ENCODE measurements at regions of chr19 and their contacts with region 1.

Region 1: GRCh38 chr19:38683393-38684080 is 36.1 kb downstream of the ACTN4 start:
- DNase-seq: peak; percentile 83 to 85
- H3K4me3 ChIP-seq: peak overlapping the region in 1 of 4 experiments; percentile 32; a peak in 1 of 8 replicates
- H3K27ac ChIP-seq: peak overlapping the region; percentile 95
- H3K4me1 ChIP-seq: peaks cover 28 to 46% (median 41%) of the 10 kb centered on the region in 4 experiments
- H3K27me3 ChIP-seq: no peaks in the 10 kb centered on the region
- CTCF ChIP-seq: no peak
- EP300 ChIP-seq: peak in 1 of 2 experiments; percentile 84; a peak in 1 of 3 replicates
- POLR2A ChIP-seq: peak in 1 of 2 experiments; percentile 32; a peak in 1 of 3 replicates
- RAD21 ChIP-seq: no peak

Region 2: GRCh38 chr19:38583219-38583984 is 100.1 kb before region 1 on chr19:
- CTCF ChIA-PET with region 1: no interaction called
- POLR2A ChIA-PET with region 1: no interaction called
- DNase-seq: no peak
- H3K4me3 ChIP-seq: no peak overlapping the region
- H3K27ac ChIP-seq: no peak overlapping the region
- H3K4me1 ChIP-seq: no peaks in the 10 kb centered on the region
- H3K27me3 ChIP-seq: no peaks in the 10 kb centered on the region
- CTCF ChIP-seq: no peak
- EP300 ChIP-seq: no peak
- POLR2A ChIP-seq: no peak
- RAD21 ChIP-seq: no peak

Region 3: DNA sequence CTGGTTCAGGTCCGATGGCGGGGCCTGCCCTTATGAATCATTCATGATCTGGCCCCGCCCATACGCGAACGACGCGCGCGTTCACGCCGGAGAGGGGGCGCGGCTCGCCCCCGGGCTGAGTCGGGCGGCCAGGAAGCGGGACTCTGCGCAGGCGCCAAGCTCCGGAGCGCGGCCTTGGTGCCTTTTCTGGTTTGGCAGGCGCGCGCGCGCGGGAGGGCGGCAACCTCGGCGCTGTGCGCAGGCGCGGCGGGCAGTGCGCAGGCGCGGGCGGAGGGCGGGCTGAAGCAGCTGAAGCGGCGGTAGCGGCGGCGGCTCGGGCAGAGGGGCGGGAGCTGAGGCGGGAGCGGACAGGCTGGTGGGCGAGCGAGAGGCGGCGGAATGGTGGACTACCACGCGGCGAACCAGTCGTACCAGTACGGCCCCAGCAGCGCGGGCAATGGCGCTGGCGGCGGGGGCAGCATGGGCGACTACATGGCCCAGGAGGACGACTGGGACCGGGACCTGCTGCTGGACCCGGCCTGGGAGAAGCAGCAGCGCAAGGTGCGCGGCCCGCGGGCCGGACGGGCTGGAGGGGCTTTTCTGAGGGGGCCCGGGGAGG is 36.1 kb before region 1 on chr19 and contains the start of gene ACTN4:
- CTCF ChIA-PET with region 1: interaction called, 3 read pairs
- POLR2A ChIA-PET with region 1: interaction called, 495 read pairs
- DNase-seq: peak; percentile 93 to 100
- H3K4me3 ChIP-seq: peak within 1 kb of the TSS; percentile 91 to 98 (median 95)
- H3K27ac ChIP-seq: peak within 1 kb of the TSS; percentile 71; the same call in 1 of the 2 replicates
- H3K4me1 ChIP-seq: peaks cover 5 to 19% (median 12%) of the 10 kb centered on the region in 4 experiments
- H3K27me3 ChIP-seq: no peaks in the 10 kb centered on the region
- CTCF ChIP-seq: no peak
- EP300 ChIP-seq: no peak
- POLR2A ChIP-seq: peak; percentile 92 to 93
- RAD21 ChIP-seq: no peak
- total RNA-seq, gene ACTN4: 520 and 530 TPM in 2 replicates

Region 4: DNA sequence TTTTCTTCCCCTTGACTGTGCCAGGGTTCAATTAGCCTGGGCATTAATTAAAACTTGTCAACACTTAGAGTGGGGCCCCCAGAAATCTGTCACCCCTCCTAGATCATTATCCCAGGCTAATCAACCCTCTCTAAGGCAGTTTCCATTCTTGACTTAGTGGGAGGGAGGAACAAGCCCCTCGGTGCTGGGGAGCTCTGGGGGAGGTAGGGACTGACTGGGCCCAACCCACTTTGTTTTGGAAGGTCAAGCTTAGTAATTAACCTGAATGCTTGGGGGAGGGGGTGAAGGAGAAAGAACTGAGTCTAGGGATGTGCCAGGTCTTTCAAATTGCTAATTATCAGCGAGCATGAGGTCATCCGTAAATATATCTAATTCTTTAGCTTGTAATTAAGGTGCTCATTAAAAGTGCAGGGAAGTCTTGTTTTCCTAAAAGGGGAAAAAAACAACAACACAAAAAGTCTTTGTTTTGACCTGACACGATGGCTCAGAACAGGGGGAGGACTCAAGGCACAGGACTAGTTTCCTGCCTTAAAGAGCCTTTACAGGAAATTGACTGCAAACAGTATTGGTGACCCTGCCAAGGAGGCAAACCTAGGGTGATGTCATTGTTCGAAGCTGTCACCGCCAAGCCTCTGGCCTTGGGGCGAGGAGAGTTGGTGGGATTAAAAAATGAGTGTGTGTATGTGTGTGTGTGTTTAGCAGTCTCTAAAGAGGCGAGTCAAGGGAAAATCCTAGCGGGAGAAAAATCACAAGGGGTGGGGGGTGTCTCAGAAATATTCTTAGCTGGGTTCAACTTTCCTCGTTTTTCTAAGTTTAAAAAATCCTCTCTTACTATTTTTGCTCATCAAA is 16.6 kb before region 1 on chr19:
- CTCF ChIA-PET with region 1: interaction called, 29 read pairs
- POLR2A ChIA-PET with region 1: interaction called, 495 read pairs
- DNase-seq: no peak
- H3K4me3 ChIP-seq: peak overlapping the region in 3 of 4 experiments; percentile 1 to 31 (median 6); a peak in 4 of 8 replicates
- H3K27ac ChIP-seq: peak overlapping the region; percentile 84
- H3K4me1 ChIP-seq: peaks cover 41 to 60% (median 47%) of the 10 kb centered on the region in 4 experiments
- H3K27me3 ChIP-seq: no peaks in the 10 kb centered on the region
- CTCF ChIP-seq: no peak
- EP300 ChIP-seq: no peak
- POLR2A ChIP-seq: no peak
- RAD21 ChIP-seq: no peak

Region 5: DNA sequence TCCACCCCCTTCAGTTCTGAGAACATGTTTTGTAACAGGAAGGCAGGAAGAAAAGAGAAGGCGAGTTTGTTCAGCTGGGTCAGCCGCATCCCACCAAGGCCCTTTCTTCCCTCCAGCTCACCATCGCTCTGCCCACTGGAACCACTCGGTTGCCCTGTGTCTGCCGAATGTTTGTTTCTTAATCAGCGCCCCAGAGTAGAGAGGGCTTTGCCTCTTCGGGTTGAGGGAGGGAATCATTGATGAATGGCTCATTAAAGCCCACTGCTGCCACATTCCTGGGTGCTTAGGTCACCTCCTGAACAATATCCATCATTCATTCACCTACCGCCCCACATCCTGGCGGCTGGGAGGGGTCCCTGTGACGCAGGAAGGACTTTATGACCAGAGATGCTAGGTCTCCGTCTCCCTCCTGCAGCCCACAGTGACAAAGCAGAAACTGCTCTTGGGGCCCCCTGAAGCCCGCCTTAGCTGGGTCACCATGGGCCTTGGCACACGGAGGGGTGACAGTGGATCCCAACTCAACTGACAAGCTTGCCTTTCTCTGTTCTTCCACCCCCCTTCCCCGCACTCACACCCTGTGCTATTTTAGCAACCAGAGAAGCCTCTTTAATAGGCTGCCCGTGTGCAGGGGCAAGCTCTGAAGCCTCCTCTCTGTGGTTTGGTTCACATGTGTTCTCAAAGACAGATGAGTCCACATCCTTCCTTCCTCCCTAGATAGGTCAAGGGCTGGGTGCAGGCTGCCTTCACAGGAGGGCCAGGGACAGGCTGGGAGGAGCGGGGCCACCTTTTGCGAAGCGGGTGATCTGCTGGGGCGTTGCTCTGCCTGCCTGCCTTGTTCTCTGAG is 10.1 kb after region 1 on chr19:
- CTCF ChIA-PET with region 1: interaction called, 8 read pairs
- POLR2A ChIA-PET with region 1: interaction called, 47 read pairs
- DNase-seq: no peak
- H3K4me3 ChIP-seq: no peak overlapping the region
- H3K27ac ChIP-seq: peak overlapping the region; percentile 84
- H3K4me1 ChIP-seq: peaks cover 3 to 36% (median 20%) of the 10 kb centered on the region in 4 experiments
- H3K27me3 ChIP-seq: no peaks in the 10 kb centered on the region
- CTCF ChIP-seq: no peak
- EP300 ChIP-seq: peak in 1 of 2 experiments; percentile 16; a peak in 1 of 3 replicates
- POLR2A ChIP-seq: peak in 1 of 2 experiments; percentile 76; a peak in 2 of 3 replicates
- RAD21 ChIP-seq: no peak

Region 6: GRCh38 chr19:38701455-38702063 is 18.0 kb after region 1 on chr19:
- CTCF ChIA-PET with region 1: interaction called, 8 read pairs
- POLR2A ChIA-PET with region 1: interaction called, 15 read pairs
- DNase-seq: no peak
- H3K4me3 ChIP-seq: no peak overlapping the region
- H3K27ac ChIP-seq: no peak overlapping the region
- H3K4me1 ChIP-seq: peaks cover 0 to 16% (median 9%) of the 10 kb centered on the region in 4 experiments; a peak in 5 of 7 replicates
- H3K27me3 ChIP-seq: no peaks in the 10 kb centered on the region; a peak in 1 of 7 replicates
- CTCF ChIP-seq: no peak
- EP300 ChIP-seq: no peak
- POLR2A ChIP-seq: no peak
- RAD21 ChIP-seq: no peak

Region 7: GRCh38 chr19:38784224-38784623 is 100.7 kb after region 1 on chr19:
- CTCF ChIA-PET with region 1: no interaction called
- POLR2A ChIA-PET with region 1: no interaction called
- DNase-seq: no peak
- H3K4me3 ChIP-seq: no peak overlapping the region
- H3K27ac ChIP-seq: no peak overlapping the region
- H3K4me1 ChIP-seq: no peaks in the 10 kb centered on the region; a peak in 1 of 7 replicates
- H3K27me3 ChIP-seq: no peaks in the 10 kb centered on the region
- CTCF ChIP-seq: no peak
- EP300 ChIP-seq: no peak
- POLR2A ChIP-seq: no peak
- RAD21 ChIP-seq: no peak

Measured in H1 (cell line).